Left ventricle myocardium inferior (tissue), 1 donor: ENCODE measurements at regions of chr6 and their contacts with region 1.

Region 1: GRCh38 chr6:31546962-31547726 is at the start of gene NFKBIL1:
- DNase-seq: peak; percentile 97
- H3K4me3 ChIP-seq: peak within 1 kb of the TSS; percentile 70
- H3K27ac ChIP-seq: peak within 1 kb of the TSS; percentile 93
- H3K4me1 ChIP-seq: peaks cover 42% of the 10 kb centered on the region
- H3K27me3 ChIP-seq: no peaks in the 10 kb centered on the region
- CTCF ChIP-seq: no peak
- total RNA-seq, gene NFKBIL1: 11.5 TPM

Region 2: DNA sequence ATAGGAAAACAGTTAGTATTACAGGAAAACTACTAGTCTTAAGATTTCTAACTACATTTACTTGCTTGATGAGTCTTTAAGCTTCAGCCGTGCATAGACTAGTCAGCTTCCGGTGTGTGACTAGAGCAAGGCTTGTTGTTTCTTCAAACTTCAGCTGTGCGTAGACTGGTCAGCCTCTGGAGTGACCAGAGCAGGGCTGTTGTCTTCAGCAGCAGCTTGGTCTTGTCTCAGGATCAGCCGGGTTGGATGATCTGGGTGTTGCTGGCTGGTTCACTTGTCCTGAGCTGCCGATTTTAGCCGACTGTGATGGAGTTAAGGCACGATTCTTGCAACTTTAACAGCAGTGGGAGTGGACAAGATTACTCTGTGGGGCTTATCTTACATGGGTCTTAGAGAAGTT is 320.0 kb before region 1 on chr6:
- intact Hi-C with region 1: no loop called
- DNase-seq: no peak
- H3K4me3 ChIP-seq: no peak overlapping the region
- H3K27ac ChIP-seq: no peak overlapping the region
- H3K4me1 ChIP-seq: peaks cover 15% of the 10 kb centered on the region
- H3K27me3 ChIP-seq: no peaks in the 10 kb centered on the region
- CTCF ChIP-seq: no peak

Region 3: GRCh38 chr6:31597006-31597405 is 49.9 kb after region 1 on chr6:
- intact Hi-C with region 1: loop called (anchors 1 kb)
- DNase-seq: no peak
- H3K4me3 ChIP-seq: no peak overlapping the region
- H3K27ac ChIP-seq: no peak overlapping the region
- H3K4me1 ChIP-seq: no peaks in the 10 kb centered on the region
- H3K27me3 ChIP-seq: no peaks in the 10 kb centered on the region
- CTCF ChIP-seq: peak; percentile 50